Cardiac septum (tissue), 1 donor: ENCODE measurements at regions of chrX and their contacts with region 1.

Region 1: DNA sequence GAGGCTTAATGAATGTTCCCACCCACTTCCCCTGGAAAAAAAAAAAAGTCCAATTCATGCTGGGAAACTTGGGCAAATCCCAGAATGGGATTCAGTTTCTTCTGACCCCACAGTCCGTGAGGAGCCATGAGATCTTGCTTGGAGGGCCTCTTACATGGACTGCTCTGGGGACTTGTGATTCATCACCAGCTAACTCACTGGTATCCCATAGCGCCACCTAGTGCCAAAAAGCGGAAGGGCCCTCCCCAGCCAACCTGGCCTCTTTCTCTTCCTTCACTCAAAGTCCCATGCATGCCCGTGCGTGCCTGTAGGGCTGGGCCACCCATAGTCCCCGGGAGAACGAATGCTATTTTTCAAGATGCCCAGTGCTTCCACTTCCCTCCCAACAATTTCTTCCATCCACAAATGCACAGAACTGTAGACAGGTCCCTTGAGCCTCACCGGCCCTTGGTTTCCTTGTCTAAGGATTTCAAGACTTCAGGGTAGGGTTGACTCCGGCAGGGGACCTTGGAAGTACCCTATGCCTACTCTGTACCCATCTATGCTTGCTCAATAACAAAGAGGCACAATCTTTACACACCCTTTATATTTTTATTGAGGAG is 5.1 kb downstream of the RTL5 start:
- DNase-seq: peak; percentile 92

Region 2: DNA sequence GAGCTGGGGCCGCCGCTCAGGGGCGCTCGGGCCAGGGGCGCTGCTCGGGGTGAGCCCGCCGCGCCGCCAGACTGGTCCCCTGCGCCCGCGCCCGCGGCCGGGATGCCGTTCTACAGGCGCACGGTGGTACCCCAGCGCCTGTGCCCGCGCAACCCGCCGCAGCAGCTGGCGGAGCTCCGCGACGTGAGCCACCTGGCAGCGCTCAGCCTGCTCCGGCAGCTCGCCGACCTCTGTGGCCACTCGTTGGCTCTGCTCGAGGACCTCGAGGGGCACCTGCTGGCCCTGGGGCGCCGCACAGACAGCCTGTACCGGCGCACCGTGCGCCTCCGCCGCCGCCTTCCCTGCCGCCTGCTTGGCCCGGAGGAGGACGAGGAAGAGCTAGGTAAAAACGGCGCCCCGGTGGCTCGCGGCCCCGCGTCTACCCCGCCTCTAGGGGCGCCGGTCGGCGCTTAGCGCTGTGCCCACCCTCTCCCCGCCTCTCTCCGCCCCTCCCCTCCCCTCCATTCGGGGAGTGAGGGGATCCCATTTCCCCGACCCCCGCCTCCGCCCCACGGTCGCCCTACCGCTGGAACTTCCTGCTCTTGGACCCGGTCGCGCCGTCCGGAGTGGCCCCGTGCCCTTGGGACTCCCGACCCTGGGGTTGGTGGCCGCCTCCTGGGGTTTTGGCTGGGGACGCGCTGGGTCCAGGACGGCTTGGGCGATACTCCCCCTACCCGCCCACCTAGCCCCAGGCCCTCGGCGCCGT is 215.5 kb before region 1 on chrX:
- intact Hi-C with region 1: loop called (anchors 10 kb)
- DNase-seq: no peak

Region 3: DNA sequence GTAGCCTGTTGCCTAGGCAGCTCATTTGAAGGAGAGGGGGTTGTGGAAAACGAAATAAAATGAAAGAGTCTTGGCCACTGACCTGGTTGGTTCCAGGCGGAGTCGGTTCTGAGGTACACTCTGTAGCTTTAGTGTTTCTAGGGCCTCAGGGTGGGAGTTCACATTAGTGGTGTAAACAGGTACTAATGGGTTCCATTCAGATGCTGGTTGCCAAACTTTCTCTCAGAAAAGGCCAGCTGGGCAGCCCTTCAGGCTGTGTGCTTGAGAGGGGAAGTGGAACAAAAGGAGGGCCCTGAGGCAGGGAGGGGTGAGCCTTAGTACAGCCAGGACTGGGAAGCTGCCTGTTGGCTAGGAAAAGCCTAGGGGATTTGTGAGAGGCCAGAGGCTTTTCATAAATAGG is 191.2 kb before region 1 on chrX:
- intact Hi-C with region 1: no loop called
- DNase-seq: no peak

Region 4: DNA sequence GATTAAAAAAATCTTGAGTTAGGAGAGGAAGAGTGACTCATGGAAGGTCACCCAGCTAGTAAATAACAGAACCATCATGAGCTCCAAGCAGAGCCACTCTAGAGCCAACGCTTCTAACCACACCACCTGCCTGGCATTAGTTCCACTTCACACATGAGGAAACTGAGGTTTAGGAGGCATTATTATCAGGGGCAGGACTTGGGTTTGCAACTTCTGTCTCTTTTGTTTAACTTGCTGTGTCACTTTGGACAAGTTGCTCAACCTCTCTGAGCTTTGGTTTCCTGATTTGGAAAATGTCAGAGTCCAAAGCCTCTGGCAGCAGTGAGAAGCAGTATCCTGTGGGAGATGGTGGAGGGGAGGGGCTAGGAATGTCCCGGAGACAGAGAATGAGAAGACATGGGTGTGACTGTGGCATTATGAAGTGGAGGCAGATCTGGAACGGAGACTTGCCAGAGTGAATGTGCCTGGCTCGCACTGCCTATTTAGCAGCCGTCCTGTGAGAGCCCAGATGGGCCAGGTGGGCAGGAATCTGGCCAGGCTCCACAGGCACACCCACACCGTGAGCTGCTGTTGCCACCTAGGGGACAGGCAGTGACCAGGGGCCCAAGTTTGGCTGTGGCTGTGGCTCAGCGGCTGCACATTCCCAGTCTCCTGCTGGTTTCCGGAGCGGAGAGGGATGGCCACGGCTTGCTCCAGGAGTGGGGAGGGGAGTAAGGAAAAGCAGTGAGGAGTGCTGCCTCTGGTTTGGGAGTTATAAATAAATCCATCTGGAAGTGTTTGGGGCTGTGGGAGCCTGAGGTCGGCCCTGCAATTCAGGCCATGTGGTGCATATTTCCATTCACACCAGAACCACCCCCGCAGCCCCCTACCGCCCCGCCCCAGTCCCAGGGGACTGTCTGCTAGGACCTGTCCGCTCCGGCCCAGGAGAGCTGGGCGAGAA is 122.6 kb before region 1 on chrX:
- intact Hi-C with region 1: loop called (anchors 5 kb)
- DNase-seq: no peak

Region 5: DNA sequence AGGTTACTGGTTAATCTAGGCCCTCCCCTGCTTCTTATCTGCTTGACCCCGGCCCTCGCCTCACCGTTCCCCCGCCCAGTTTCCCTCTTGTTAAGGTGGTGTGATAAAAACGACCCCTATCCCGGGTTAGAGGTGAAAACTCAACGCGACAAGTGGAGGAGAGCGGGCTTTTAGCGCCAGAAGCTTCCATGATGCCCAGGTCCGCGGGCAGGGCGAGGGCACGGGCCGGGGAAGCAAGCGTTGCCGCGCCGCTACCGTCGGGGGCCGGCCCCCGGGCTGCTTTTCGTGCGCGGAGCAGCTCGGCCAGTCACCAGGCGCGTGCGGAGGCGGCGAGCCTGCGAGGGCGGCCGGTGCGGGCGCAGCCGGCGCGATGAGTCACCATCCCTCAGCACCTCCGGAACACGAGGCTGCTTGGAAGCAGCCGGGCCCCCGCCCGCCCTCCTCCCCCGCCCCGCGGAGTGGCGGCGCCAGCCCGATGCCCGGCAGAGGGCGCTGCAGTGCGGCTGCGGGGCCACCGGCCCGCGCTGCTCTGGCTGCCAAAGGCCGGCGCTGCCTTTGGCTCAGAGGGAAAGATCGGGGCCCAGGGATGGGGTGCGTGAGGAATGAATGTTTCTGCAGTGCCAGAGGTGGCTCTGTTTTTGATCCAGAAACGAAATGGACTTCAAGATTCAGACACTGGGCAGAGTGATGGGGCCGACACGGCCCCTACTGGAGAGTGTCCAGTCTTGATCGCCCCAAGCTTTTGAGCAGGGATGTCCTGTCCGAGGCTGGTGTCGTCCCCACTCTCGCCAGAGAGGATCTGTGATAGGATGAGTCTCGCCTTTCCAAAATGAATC is 108.1 kb before region 1 on chrX:
- intact Hi-C with region 1: loop called (anchors 2 kb)
- DNase-seq: peak; percentile 91

Region 6: DNA sequence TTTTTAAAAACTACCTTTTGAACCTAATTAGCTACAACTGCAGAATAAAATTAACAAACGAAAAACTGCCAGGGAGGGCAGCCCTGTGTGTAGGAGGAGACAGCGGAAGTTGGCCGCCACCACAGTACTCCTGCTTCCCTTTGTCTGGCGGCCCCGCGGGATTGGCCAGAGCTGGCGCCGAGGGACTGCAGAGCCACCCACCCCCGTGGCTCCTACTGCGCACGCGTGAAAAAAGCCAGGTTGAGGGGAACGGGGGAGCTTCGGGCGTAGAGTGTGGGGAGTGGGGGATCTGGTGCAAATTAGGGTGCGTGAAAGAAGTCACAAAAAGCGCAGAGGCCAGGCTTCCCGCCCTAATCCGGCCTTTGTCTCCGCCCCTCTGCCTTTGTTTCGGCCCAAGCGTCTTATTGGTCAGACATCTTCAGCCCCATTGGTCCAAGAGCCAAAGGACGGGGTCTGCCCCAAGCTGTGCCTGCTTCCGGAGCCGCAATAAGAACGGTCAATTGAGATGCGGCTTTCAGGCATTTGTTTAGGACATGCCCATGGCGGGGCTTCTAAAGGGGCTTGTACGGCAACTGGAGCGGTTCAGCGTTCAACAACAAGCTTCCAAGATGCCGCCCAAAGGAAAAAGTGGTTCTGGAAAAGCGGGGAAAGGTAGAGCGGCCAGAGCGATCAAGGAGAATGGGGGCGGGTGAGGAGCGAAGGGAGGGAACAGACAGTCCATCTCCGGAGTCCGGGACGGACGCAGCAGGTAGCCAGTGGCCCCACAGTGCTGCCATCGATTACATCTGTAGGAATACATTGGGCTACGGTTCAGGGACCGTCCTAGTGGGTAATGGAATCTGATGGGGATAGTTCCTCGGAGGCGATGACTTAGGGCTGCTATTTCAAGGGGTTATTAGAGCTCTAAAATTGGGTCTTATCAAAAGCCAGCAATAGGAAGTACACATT is 54.8 kb after region 1 on chrX and contains the start of gene PIN4:
- intact Hi-C with region 1: loop called (anchors 5 kb)
- DNase-seq: peak; percentile 94
- total RNA-seq, gene PIN4: 8.5 TPM